Dendritic cell treated with granulocyte-macrophage colony-stimulating factor and Interleukin-4, amounts not matched to agents 40 ng/mL and 50 ng/mL, for 4 days (primary cell): ENCODE measurements at regions of chr2 and their contacts with region 1.

Region 1: GRCh38 chr2:200963124-200963917 is at the start of gene ORC2:
- H3K4me3 Mint-ChIP-seq: peak within 1 kb of the TSS; percentile 87
- H3K27ac Mint-ChIP-seq: peak within 1 kb of the TSS; percentile 91
- H3K4me1 Mint-ChIP-seq: peaks cover 33% of the 10 kb centered on the region
- H3K27me3 Mint-ChIP-seq: no peaks in the 10 kb centered on the region

Region 2: DNA sequence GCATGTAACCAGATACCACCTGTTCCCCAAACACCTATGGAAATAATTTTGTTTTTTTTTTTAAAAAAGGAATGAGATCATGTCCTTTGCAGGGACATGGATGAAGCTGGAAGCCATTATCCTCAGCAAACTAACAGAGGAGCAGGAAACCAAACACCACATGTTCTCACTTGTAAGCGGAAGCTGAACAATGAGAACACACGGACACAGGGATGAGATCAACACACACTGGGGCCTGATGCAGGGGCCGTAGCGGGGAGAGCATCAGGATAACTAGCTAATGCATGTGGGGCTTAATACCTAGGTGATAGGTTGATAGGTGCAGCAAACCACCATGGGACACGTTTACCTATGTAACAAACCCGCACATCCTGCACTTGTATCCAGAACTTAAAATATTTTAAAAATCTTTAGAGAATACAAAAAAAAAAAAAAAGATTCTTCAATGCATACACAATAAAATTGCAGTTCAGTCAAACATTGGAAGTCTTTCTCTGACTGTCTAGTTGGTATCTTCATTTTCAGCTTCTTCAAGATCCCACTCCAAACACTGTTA is 208.0 kb after region 1 on chr2:
- intact Hi-C with region 1: loop called (anchors 10 kb)
- H3K4me3 Mint-ChIP-seq: no peak overlapping the region
- H3K27ac Mint-ChIP-seq: no peak overlapping the region
- H3K4me1 Mint-ChIP-seq: peaks cover 30% of the 10 kb centered on the region
- H3K27me3 Mint-ChIP-seq: no peaks in the 10 kb centered on the region